MCF 10A (cell line): ENCODE measurements at regions of chr7 and their contacts with region 1.

Region 1: GRCh38 chr7:150753826-150754603 is 16.8 kb downstream of the GIMAP5 start:
- DNase-seq: peak; percentile 20
- H3K4me3 Mint-ChIP-seq: no peak overlapping the region
- H3K27ac Mint-ChIP-seq: no peak overlapping the region
- H3K4me1 Mint-ChIP-seq: no peaks in the 10 kb centered on the region
- H3K27me3 Mint-ChIP-seq: peaks cover 4% of the 10 kb centered on the region
- CTCF ChIP-seq: no peak

Region 2: GRCh38 chr7:150448789-150449147 is 305.2 kb before region 1 on chr7:
- CTCF ChIA-PET with region 1: interaction called, 32 read pairs
- POLR2A ChIA-PET with region 1: no interaction called
- intact Hi-C with region 1: loop called (anchors 1 kb)
- DNase-seq: peak; percentile 73
- H3K4me3 Mint-ChIP-seq: no peak overlapping the region
- H3K27ac Mint-ChIP-seq: no peak overlapping the region
- H3K4me1 Mint-ChIP-seq: no peaks in the 10 kb centered on the region
- H3K27me3 Mint-ChIP-seq: peaks cover 17% of the 10 kb centered on the region
- CTCF ChIP-seq: peak; percentile 93

Region 3: DNA sequence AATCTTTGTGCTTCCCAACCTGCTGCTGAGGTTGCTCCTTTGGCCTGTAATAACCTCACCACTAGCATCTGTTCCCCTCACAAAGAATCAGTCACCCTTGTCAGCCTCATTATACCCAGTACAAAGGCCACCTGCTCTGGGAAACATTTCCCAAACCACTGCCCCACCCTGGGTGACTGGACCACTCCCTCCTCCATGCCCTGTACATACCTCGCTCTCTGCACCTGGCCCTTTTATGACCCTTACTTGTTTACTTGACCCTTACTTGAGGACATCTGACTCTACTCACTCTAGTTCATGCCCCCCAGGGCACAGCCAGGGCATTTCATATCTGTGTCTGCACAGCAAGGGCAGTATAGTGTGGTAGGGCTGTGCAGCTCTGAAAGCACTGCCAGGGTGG is 76.9 kb after region 1 on chr7:
- CTCF ChIA-PET with region 1: no interaction called
- POLR2A ChIA-PET with region 1: no interaction called
- intact Hi-C with region 1: no loop called
- DNase-seq: no peak
- H3K4me3 Mint-ChIP-seq: no peak overlapping the region
- H3K27ac Mint-ChIP-seq: no peak overlapping the region
- H3K4me1 Mint-ChIP-seq: no peaks in the 10 kb centered on the region
- H3K27me3 Mint-ChIP-seq: peaks cover 60% of the 10 kb centered on the region
- CTCF ChIP-seq: no peak

Region 4: DNA sequence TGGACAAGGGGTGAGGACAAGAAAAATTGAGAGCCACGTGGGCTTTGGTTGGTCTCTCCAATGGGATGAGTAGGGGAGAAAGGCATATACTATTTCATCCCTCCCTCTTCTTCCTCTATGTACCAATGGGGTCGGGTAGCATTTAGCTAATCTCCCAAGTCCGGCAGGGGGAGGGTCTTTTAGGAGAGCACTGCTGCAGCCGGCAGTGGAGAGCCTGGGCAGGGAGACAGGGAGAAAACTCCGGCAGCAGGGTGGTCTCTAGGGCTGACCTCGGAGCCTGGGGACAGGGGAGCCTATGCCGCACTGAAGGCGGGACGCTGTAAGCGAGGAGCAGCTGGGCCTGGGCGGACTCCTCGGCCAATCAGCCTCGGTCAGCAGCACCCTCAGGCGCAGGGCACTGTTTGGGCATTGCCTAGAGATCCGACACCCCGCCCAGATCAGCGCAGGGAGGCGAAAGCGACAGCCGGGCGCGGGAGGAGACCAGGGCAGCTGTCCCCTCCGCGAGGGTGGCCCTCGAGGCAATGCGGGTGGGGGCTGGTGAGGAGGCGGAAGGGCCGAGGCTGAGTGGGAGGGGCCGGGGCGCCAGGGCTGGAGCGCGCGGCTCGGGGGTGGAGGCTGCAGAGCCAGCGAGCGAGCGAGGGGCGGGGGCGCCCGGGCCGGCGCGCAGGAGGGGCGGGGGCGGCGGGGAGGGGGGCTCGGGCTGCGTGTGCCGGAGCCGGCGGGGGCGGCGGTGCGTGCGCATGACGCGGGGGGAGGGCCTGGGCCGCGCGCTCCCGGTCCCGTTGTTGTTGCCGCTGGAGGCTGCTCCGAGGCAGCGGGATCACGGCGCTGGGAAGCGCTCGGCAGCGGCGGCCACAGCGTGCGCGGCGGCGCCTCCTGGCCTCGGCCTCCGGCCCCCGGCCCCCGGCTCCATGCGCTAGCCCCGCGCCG is 331.9 kb after region 1 on chr7 and contains the start of gene AGAP3:
- CTCF ChIA-PET with region 1: no interaction called
- POLR2A ChIA-PET with region 1: no interaction called
- intact Hi-C with region 1: no loop called
- DNase-seq: peak; percentile 73
- H3K4me3 Mint-ChIP-seq: peak within 1 kb of the TSS; percentile 77
- H3K27ac Mint-ChIP-seq: peak within 1 kb of the TSS; percentile 44
- H3K4me1 Mint-ChIP-seq: peaks cover 34% of the 10 kb centered on the region
- H3K27me3 Mint-ChIP-seq: no peaks in the 10 kb centered on the region
- CTCF ChIP-seq: no peak
- total RNA-seq, gene AGAP3: 95.6 and 138 TPM in 2 replicates